MCF 10A (cell line): ENCODE measurements at regions of chr1 and their contacts with region 1.

Region 1: GRCh38 chr1:19661721-19662228 is 2.9 kb upstream of the HTR6 start:
- DNase-seq: peak; percentile 44
- H3K4me3 Mint-ChIP-seq: no peak overlapping the region
- H3K27ac Mint-ChIP-seq: no peak overlapping the region
- H3K4me1 Mint-ChIP-seq: peaks cover 10% of the 10 kb centered on the region
- H3K27me3 Mint-ChIP-seq: peaks cover 14% of the 10 kb centered on the region
- CTCF ChIP-seq: peak; percentile 70

Region 2: DNA sequence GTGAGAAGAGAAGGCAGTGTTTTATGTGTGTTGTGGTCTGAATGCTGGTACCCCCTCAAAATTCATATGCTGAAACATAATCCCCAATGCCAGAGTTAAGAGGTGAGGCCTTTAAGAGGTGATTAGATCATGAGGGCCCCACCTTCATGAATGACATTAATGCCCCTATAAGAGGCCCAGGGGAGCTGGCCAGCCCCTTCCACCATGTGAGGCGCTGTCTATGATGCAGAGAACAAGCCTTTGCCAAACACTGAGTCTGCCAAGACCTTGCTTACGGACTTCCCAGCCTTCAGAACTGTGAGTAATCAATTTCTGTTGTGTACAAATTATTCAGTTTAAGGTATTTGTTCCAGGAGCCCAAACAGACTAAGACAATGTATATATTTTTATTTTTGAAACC is 196.7 kb before region 1 on chr1:
- CTCF ChIA-PET with region 1: interaction called, 12 read pairs
- POLR2A ChIA-PET with region 1: no interaction called
- intact Hi-C with region 1: no loop called
- DNase-seq: no peak
- H3K4me3 Mint-ChIP-seq: no peak overlapping the region
- H3K27ac Mint-ChIP-seq: no peak overlapping the region
- H3K4me1 Mint-ChIP-seq: peaks cover 19% of the 10 kb centered on the region
- H3K27me3 Mint-ChIP-seq: no peaks in the 10 kb centered on the region
- CTCF ChIP-seq: no peak

Region 3: DNA sequence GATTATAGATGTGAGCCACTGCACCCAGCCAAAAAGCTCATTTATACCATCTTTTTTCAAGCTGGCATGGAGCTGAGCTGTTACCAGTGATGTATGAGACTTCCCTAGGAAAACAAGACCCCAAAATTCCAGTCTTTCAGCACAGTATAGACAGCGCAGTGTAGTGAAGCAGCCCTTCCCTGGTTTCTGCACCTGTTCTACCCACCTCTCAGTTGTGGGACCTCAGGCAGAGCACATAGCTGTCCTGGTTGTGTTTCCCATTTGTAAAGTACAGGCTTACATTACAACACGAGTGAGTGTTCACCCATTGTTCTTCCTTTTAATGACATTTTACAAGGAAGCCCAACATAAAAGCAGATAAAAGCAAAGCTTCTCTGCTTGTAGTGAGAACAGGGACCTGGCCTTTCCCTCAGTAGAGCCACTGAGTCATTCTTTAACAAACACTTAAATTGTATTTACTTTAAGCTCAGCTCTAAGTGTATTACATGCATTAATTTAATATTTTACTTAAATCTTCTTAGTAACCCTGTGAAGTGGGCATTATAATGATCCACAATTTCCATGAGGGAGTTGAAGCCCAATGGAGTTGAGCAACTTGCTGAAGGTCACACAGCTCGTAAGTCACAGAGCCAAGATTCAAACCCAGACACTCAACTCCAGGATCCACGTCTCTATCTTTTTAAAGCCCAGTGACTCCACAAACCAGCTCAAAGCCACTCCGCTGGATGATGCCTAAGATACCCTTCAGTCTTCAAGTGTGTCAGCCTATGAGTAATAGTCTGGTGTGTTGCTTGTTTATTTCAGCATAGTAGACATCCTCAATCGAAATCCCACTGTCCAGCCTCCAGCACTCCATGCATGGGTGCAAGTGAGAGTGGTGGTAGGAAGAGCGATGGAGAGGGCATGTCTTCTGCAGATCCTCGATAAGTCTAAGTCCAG is 135.9 kb before region 1 on chr1:
- CTCF ChIA-PET with region 1: no interaction called
- POLR2A ChIA-PET with region 1: no interaction called
- intact Hi-C with region 1: no loop called
- DNase-seq: no peak
- H3K4me3 Mint-ChIP-seq: no peak overlapping the region
- H3K27ac Mint-ChIP-seq: no peak overlapping the region
- H3K4me1 Mint-ChIP-seq: no peaks in the 10 kb centered on the region
- H3K27me3 Mint-ChIP-seq: no peaks in the 10 kb centered on the region
- CTCF ChIP-seq: no peak

Region 4: DNA sequence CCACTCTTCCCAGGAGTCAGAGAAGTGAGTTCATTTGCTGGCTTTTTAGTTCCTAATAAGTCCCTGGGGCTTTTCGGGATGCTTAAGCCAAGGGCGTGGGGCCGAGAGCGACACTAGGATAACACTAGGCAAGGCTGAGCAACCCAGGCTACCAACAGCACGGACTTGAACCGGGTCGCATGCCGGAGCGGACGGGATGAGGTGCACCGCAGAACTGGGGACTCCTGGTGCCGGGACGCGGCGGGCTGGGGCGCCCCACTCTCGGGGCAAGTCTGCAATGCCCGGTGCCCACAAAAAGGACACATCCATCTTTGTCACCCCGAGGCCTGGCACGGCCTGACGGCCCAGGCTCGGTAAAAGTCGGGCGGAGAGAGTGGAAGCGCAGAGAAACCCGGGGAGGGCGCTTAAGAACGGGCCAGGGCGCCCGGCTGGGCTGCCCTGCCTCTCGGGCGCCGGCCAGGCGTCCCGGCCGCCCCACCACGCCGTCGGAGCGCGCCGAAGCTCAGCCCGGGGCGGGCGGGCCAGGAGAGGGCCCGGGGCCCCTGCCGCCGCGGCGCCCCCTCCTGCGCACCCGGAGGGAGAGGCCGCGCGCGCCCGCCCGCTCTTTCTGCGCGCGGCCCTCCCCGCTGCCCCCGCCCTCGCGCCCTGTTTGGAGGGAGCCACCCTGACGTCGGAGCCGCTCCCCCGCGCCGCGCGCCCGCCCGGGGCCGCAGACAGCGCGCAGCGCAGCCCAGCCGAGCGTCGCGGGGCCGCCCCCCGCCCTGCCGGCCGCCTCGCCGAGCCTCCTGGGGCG is 18.0 kb before region 1 on chr1 and contains the start of gene NBL1:
- CTCF ChIA-PET with region 1: interaction called, 10 read pairs
- POLR2A ChIA-PET with region 1: interaction called, 5 read pairs
- intact Hi-C with region 1: no loop called
- DNase-seq: peak; percentile 55
- H3K4me3 Mint-ChIP-seq: peak within 1 kb of the TSS; percentile 92
- H3K27ac Mint-ChIP-seq: peak within 1 kb of the TSS; percentile 91
- H3K4me1 Mint-ChIP-seq: peaks cover 54% of the 10 kb centered on the region
- H3K27me3 Mint-ChIP-seq: no peaks in the 10 kb centered on the region
- CTCF ChIP-seq: no peak
- total RNA-seq, gene NBL1: 70.4 and 73.3 TPM in 2 replicates

Region 5: GRCh38 chr1:19682257-19682656 is 20.5 kb after region 1 on chr1:
- CTCF ChIA-PET with region 1: interaction called, 21 read pairs
- POLR2A ChIA-PET with region 1: interaction called, 3 read pairs
- intact Hi-C with region 1: no loop called
- DNase-seq: peak; percentile 75
- H3K4me3 Mint-ChIP-seq: no peak overlapping the region
- H3K27ac Mint-ChIP-seq: no peak overlapping the region
- H3K4me1 Mint-ChIP-seq: peaks cover 8% of the 10 kb centered on the region
- H3K27me3 Mint-ChIP-seq: no peaks in the 10 kb centered on the region
- CTCF ChIP-seq: no peak

Region 6: GRCh38 chr1:19704247-19705113 is 42.7 kb after region 1 on chr1:
- CTCF ChIA-PET with region 1: interaction called, 103 read pairs
- POLR2A ChIA-PET with region 1: interaction called, 17 read pairs
- intact Hi-C with region 1: loop called (anchors 1 kb)
- DNase-seq: peak; percentile 52
- H3K4me3 Mint-ChIP-seq: no peak overlapping the region
- H3K27ac Mint-ChIP-seq: no peak overlapping the region
- H3K4me1 Mint-ChIP-seq: no peaks in the 10 kb centered on the region
- H3K27me3 Mint-ChIP-seq: no peaks in the 10 kb centered on the region
- CTCF ChIP-seq: peak; percentile 81